ENCODE measurements at regions of chr7 and their contacts with region 1.

Region 1: GRCh38 chr7:75914730-75915585 is at the start of gene POR:
- DNase-seq: peak; percentile 69
- ATAC-seq: peak; percentile 96
- H3K4me3 ChIP-seq: peak within 1 kb of the TSS; percentile 92
- H3K27ac ChIP-seq: peak within 1 kb of the TSS; percentile 65
- H3K4me1 ChIP-seq: peaks cover 4% of the 10 kb centered on the region; the same call in 1 of the 2 replicates
- H3K27me3 ChIP-seq: no peaks in the 10 kb centered on the region
- CTCF ChIP-seq: no peak
- EP300 ChIP-seq: no peak
- POLR2A ChIP-seq: peak; percentile 100
- RAD21 ChIP-seq: 0 out of 2 replicates have a peak, but pooled peaks have one; percentile 3
- polyA plus RNA-seq, gene POR: 2.2 to 8.2 TPM

Region 2: DNA sequence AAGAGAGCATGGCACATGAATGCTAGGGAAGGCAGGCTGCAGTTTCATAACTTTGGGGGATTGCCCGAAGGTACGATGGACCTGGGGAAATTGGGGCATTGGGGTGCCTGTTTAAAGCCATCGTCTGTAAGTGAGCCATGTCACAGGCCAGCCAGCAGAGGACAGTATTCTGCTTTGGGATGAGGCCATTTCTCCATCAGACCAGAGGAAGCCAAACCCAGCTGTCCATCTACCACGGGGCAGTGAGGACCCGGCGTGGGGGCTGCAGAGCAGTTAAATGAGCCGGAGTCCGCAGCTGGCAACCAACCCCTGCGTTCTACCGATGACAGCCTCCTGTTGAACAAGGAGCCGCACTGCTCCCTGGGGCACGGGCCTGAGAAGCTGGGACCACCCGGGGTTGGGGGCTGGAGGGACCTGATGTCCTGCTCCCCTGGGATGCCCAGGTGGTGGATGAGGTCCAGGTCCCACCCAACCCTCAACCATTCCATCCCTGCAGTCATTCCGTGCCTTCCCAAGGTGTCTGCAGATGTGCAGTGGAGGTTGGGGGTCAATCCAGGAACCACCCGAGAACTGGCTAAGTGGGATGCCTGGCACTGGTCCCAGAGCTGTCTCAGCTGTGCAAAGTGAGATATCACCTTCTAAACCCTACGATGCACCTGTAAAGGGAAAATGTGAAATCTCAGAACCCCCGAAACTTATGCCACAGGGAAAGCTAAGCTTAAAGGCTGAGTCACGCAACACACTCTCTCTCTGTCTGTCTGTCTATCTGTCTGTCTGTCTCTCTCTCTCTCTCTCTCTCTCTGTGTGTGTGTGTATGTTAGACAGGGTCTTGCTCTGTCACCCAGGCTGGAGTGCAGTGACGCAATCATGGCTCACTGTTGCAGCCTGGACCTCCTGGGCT is 48.2 kb before region 1 on chr7:
- CTCF ChIA-PET with region 1: interaction called, 11 read pairs
- POLR2A ChIA-PET with region 1: interaction called, 3 read pairs
- RAD21 ChIA-PET with region 1: interaction called, 4 read pairs
- SMC1A ChIA-PET with region 1: interaction called, 3 read pairs
- in situ Hi-C with region 1: no loop called
- intact Hi-C with region 1: no loop called
- DNase-seq: no peak
- ATAC-seq: peak; percentile 98
- H3K4me3 ChIP-seq: no peak overlapping the region
- H3K27ac ChIP-seq: no peak overlapping the region
- H3K4me1 ChIP-seq: no peaks in the 10 kb centered on the region
- H3K27me3 ChIP-seq: no peaks in the 10 kb centered on the region
- CTCF ChIP-seq: peak; percentile 97 to 98 (median 97)
- EP300 ChIP-seq: no peak
- POLR2A ChIP-seq: no peak
- RAD21 ChIP-seq: peak; percentile 97

Region 3: DNA sequence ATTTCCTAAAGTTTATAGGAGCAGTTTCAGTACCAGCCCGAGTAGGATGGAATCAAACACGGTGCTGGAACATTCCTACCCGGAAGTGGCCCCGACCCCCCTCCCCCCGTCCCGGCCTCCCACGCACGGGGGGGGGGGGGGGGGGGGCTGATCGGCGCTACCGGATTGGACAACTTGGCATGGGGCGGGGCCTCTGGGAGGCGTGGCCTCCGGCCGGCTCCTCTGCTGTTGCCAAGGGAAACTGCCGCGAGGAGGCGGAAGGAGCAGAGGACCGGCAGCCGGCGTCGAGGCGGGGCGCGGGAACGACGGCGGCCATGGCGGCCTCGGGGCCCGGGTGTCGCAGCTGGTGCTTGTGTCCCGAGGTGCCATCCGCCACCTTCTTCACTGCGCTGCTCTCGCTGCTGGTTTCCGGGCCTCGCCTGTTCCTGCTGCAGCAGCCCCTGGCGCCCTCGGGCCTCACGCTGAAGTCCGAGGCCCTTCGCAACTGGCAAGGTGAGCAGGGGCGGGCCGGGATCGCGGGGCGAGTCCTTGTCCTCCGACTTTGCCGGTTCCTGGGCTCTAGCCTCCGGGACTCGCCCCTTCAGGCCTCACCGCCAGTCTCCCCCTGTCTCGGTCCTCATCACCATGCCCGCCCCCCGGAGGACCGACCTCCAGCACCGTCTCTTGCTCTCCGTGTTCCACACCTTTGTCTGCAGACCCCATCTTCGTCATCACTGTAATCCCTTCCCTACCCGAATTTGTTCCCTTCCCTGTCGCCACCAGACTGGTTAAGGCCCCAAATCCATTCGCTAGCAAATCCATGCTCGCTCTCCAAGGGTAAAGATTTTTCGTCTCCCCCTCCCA is 36.0 kb before region 1 on chr7 and contains the start of gene RHBDD2:
- CTCF ChIA-PET with region 1: interaction called, 4 read pairs
- POLR2A ChIA-PET with region 1: interaction called, 27 read pairs
- RAD21 ChIA-PET with region 1: interaction called, 3 read pairs
- SMC1A ChIA-PET with region 1: no interaction called
- in situ Hi-C with region 1: no loop called
- intact Hi-C with region 1: loop called (anchors 2 kb)
- DNase-seq: peak; percentile 59
- ATAC-seq: peak; percentile 99
- H3K4me3 ChIP-seq: peak within 1 kb of the TSS; percentile 95
- H3K27ac ChIP-seq: peak within 1 kb of the TSS; percentile 76
- H3K4me1 ChIP-seq: peaks cover 8% of the 10 kb centered on the region
- H3K27me3 ChIP-seq: no peaks in the 10 kb centered on the region
- CTCF ChIP-seq: peak in 1 of 3 experiments; percentile 12; a peak in 1 of 6 replicates
- EP300 ChIP-seq: no peak
- POLR2A ChIP-seq: peak; percentile 98
- RAD21 ChIP-seq: no peak
- polyA plus RNA-seq, gene RHBDD2: 3.9 to 7.4 TPM

Region 4: DNA sequence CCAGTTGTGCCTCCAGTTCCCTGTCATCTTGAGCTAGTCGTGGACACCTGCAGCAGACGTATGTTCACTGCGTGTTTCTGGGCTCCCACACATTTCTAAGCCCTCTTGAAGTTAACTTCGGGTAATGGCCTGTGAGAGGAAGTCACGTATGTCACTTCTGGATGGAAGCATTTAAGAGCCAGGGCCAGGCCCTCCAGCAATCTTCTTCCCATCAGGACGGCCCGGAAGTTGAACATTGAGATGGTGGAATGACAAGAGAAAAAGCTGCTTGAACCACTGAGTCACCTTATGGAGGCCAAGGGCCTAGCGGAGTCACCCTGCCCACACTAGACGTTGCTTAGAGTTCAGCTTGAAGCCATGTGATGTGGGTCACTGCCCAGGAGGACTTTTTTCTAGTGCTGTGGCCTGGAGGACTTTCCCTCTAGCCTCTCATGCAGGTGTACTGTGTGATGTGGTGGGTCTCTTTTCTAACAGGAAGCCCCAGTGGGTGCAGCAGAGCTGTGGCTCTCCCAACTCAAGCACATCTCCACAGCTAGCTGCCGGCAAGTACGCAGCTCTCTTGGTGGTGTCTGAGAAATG is 13.5 kb after region 1 on chr7:
- CTCF ChIA-PET with region 1: interaction called, 7 read pairs
- POLR2A ChIA-PET with region 1: interaction called, 17 read pairs
- RAD21 ChIA-PET with region 1: interaction called, 7 read pairs
- SMC1A ChIA-PET with region 1: interaction called, 13 read pairs
- in situ Hi-C with region 1: no loop called
- intact Hi-C with region 1: no loop called
- DNase-seq: peak; percentile 61
- ATAC-seq: peak; percentile 96
- H3K4me3 ChIP-seq: no peak overlapping the region
- H3K27ac ChIP-seq: peak overlapping the region; percentile 27
- H3K4me1 ChIP-seq: peaks cover 29% of the 10 kb centered on the region
- H3K27me3 ChIP-seq: no peaks in the 10 kb centered on the region
- CTCF ChIP-seq: no peak
- EP300 ChIP-seq: 0 out of 4 replicates have a peak, but pooled peaks have one; percentile 13 to 25
- POLR2A ChIP-seq: peak; percentile 37; the same call in 1 of the 2 replicates
- RAD21 ChIP-seq: peak; percentile 6; the same call in 1 of the 2 replicates